Breast epithelium (tissue), 4 donors: ENCODE measurements at regions of chrX and their contacts with region 1.

Region 1: DNA sequence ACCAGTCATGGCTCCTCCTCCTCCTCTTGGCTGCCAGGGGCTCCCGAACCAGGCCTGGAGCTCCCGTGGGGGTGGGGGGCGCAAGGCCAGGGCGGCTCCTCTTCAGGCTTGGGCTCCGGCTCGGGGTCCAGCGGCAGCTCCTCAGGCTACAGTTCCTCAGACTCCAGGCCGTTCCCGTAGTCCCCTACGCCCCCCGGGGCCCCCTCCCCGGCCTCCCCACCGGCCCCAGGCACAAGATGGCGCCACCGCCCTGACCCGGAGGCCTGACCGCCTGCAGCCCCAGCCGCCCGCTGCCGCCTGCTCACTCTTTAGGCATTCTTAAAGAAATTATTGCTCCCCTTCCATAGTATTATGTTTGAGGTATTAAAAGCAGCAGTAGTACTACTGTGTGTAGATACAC is 54.5 kb downstream of the TAF1 start:
- DNase-seq: no peak
- H3K4me3 ChIP-seq: no peak overlapping the region
- H3K27ac ChIP-seq: no peak overlapping the region
- H3K4me1 ChIP-seq: no peaks in the 10 kb centered on the region
- H3K27me3 ChIP-seq: peaks cover 0 to 24% of the 10 kb centered on the region in 2 donors
- CTCF ChIP-seq: no peak
- POLR2A ChIP-seq: no peak

Region 2: GRCh38 chrX:71222929-71223328 is 197.8 kb before region 1 on chrX and contains the start of gene GJB1:
- intact Hi-C with region 1: loop called (anchors 5 kb)
- DNase-seq: no peak
- H3K4me3 ChIP-seq: no peak within 1 kb of the TSS
- H3K27ac ChIP-seq: no peak within 1 kb of the TSS
- H3K4me1 ChIP-seq: no peaks in the 10 kb centered on the region
- H3K27me3 ChIP-seq: peaks cover 0 to 56% of the 10 kb centered on the region in 2 donors
- CTCF ChIP-seq: no peak
- POLR2A ChIP-seq: no peak
- total RNA-seq, gene GJB1: 1.8 to 6.9 TPM in 2 of 3 donors, not detected in the other